Activated CD4-positive, alpha-beta memory T cell treated with anti-CD3 and anti-CD28 coated beads for 36 hours (primary cell): ENCODE measurements at regions of chr1 and their contacts with region 1.

Region 1: DNA sequence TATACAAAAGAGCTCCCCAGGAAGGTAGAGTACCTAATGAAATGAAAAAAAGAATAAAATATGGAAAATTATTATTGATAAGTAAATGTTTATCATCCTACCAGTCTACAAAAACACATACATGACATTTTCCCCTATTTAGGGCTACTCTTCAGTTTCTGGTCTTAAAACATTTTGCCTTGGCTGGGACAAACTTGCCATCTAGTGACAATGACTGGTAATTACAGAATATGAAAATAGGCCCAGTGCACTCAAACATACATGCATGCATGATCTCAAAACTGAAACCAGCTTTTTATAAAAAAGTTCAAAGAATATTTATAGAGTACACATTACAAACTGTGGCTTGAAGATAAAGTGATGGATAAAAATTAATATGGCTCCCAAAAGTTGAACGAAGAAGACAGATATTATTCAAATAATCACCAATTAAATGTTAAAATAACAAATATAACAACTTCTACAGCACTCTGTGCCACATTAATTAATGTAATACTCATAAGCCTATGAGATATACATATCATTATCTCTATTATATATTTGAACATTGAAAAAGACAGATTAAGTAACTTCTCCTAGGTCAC is 10.5 kb upstream of the RNPC3 start:
- DNase-seq: no peak
- H3K4me3 Mint-ChIP-seq: no peak overlapping the region
- H3K27ac Mint-ChIP-seq: no peak overlapping the region
- H3K4me1 Mint-ChIP-seq: peaks cover 22% of the 10 kb centered on the region
- H3K27me3 Mint-ChIP-seq: no peaks in the 10 kb centered on the region

Region 2: DNA sequence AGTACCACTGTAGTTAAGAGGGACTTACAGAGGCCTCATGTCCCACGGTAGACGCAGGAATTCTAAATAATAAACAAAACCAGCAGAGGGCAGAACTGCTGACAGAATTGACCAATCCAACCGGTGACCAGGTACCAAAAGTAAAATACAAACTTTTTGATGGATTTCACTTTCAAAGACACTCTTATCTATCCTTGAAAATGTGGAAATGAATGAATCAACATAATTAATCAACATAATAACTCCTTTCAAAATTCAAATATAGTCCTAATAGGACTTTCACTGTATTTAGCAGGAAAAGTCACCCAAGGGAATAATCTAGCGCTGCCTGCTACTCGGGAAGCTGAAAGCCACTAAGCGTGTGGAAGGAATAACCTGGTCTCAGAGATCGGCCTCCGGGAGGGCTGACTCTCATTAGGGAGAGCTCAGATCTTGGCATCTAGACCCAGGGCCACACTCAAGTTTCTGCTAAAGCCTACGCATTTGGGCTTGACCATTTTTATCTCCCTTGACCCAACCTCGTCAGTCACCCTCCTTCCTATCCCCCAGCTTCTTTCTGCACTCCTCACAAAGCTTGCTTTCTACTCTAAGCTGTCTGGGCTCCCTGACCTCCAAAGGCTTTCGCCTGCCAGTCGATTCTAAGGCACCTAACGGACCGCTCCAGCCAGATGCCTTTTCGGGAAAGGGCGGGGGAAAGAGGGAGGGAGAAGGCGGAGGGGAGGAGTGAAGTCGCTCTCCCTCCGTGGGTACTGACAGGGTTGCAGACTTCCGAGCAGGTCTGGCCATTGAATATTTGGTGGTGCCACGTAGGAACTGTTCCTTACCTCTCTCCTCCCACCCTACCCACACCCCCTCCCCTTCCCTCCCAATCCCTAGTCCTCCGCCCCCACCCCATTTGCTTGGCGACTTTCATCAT is 408.3 kb before region 1 on chr1:
- CTCF ChIA-PET with region 1: interaction called, 12 read pairs
- POLR2A ChIA-PET with region 1: no interaction called
- intact Hi-C with region 1: loop called (anchors 1 kb)
- DNase-seq: no peak
- H3K4me3 Mint-ChIP-seq: no peak overlapping the region
- H3K27ac Mint-ChIP-seq: no peak overlapping the region
- H3K4me1 Mint-ChIP-seq: peaks cover 14% of the 10 kb centered on the region
- H3K27me3 Mint-ChIP-seq: peaks cover 32% of the 10 kb centered on the region

Region 3: GRCh38 chr1:103461161-103462105 is 53.6 kb before region 1 on chr1:
- CTCF ChIA-PET with region 1: interaction called, 3 read pairs
- POLR2A ChIA-PET with region 1: no interaction called
- intact Hi-C with region 1: loop called (anchors 5 kb)
- DNase-seq: no peak
- H3K4me3 Mint-ChIP-seq: no peak overlapping the region
- H3K27ac Mint-ChIP-seq: no peak overlapping the region
- H3K4me1 Mint-ChIP-seq: no peaks in the 10 kb centered on the region
- H3K27me3 Mint-ChIP-seq: peaks cover 2% of the 10 kb centered on the region

Region 4: DNA sequence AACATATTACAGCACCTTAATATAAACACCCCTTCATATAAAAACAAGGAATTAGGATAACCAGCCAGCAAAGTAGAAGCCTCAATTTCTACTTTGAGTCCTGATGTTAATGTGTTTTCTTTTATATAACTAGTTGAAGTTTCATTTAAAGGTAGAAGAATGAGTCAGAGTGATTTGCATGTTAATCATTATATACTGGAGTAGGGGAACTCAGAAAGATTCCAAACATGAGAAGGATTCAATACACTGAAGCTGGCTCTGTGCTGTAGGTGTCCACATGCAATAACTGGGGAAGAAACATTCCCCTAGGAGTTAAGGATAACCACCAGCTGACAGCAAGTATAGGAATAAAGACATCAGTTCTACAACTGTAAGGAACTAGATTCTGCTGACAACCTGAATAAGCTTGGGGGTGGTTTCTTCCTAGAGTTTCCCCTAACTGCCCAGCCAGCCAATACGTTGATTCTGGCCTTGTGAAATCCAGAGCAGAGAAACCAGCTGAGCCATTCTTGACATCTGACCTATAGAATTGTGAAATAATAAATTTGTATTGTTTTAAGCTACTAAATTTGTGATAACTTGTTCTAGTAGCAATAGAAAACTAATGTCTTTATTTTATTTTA is 22.9 kb before region 1 on chr1:
- CTCF ChIA-PET with region 1: no interaction called
- POLR2A ChIA-PET with region 1: no interaction called
- intact Hi-C with region 1: no loop called
- DNase-seq: no peak
- H3K4me3 Mint-ChIP-seq: no peak overlapping the region
- H3K27ac Mint-ChIP-seq: no peak overlapping the region
- H3K4me1 Mint-ChIP-seq: no peaks in the 10 kb centered on the region
- H3K27me3 Mint-ChIP-seq: peaks cover 2% of the 10 kb centered on the region

Region 5: DNA sequence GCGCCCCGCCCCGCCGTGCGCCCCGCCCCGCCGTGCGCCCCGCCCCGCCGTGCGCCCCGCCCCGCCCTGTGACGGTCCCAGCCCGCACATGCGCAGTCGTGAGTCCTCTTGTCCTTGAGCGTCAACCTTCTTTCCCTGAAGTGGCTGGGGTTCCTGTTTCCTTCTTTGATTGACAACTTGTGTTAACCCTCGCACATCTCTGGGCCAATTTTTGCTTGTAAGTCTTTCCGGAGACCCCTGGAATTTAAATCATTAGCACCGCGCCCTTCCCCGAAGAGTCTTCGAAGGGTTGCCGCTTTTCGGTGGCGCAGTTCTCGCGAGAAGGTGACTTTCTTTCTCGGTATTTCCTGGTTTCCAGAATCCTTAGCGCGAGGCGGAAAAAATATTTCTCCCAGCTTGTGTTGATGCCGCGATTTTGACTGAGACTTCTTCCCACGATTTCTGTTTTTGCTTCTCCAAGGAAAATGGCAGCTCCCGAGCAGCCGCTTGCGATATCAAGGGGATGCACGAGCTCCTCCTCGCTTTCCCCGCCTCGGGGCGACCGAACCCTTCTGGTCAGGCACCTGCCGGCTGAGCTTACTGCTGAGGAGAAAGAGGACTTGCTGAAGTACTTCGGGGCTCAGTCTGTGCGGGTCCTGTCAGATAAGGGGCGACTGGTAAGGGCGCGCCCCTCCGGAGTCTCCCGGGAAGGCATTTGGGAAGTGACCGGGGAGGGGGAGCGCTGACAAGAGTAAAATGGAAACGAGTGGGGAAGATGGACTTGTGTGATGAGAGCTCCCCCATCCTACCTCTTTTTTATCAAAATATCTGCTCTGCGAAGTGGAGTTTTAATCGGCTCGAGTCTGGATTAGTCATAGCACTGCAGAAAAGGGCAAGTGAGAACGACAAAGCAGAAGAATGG is 10.8 kb after region 1 on chr1 and contains the start of gene RNPC3:
- CTCF ChIA-PET with region 1: interaction called, 25 read pairs
- POLR2A ChIA-PET with region 1: no interaction called
- intact Hi-C with region 1: loop called (anchors 1 kb)
- DNase-seq: peak; percentile 88
- H3K4me3 Mint-ChIP-seq: peak within 1 kb of the TSS; percentile 98
- H3K27ac Mint-ChIP-seq: peak within 1 kb of the TSS; percentile 99
- H3K4me1 Mint-ChIP-seq: peaks cover 39% of the 10 kb centered on the region
- H3K27me3 Mint-ChIP-seq: no peaks in the 10 kb centered on the region
- total RNA-seq, gene RNPC3: 13.9 to 16.4 TPM